ENCODE measurements at regions of chr22 and their contacts with region 1.

Region 1: DNA sequence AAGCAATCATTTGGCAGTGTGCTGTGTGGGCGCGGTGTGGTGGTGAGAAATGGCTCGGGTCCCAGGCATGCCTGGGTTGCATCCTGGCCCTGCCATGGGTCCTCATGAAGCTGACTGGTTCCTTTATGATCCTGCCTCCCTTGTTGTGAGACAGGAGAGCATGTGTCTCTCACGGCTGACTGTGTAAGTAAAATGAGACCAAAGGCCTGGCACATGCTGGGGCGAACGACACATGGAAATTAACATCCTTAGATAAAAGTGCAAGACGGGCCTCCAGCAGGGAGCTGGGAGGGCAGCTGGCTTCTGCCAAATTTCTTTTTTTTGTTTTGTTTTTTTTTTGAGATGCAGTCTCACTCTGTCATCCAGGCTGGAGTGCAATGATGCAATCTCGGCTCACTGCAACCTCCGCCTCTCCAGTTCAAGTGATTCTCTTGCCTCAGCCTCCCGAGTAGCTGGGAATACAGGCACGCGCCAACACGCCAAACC is 9.4 kb upstream of the FBLN1 start:
- DNase-seq: no peak
- H3K4me3 ChIP-seq: no peak overlapping the region
- H3K27ac ChIP-seq: peak overlapping the region; percentile 48 to 82
- H3K4me1 ChIP-seq: no peaks in the 10 kb centered on the region
- H3K27me3 ChIP-seq: no peaks in the 10 kb centered on the region
- CTCF ChIP-seq: no peak
- POLR2A ChIP-seq: no peak

Region 2: DNA sequence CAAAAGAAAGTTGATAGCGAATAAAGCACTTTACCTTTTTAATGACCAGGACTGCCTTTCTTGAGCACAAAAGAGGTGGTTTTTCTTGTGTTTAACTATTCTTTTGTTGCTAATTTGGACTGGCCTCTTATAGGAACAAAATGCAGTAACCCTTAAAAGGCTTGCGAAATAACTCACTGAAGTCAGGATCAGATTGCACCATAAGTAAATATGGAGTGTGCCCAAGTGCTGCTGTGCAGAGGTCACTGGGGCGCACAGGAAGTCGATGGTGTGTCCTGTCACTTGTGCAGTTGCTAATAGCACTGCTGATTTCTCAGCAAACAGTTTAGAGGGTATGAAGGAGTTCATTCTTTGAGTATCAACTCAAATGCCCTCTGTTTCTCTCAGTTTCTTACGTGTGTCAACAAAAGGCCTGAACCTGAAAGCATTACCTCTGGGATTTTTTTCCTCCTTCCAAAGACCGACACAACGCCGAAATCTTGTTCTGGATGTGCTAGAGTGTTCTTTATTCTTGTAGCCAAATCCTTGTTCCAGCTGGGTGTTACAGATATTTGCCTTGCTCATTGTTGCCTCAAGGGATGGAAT is 249.6 kb after region 1 on chr22:
- intact Hi-C with region 1: loop called (anchors 10 kb)
- DNase-seq: no peak
- H3K4me3 ChIP-seq: no peak overlapping the region
- H3K27ac ChIP-seq: peak overlapping the region in 1 of 2 donors; percentile 51
- H3K4me1 ChIP-seq: no peaks in the 10 kb centered on the region
- H3K27me3 ChIP-seq: no peaks in the 10 kb centered on the region
- CTCF ChIP-seq: no peak
- POLR2A ChIP-seq: no peak

Measured in breast epithelium (tissue), 4 donors.